SK-N-SH (cell line): ENCODE measurements at regions of chr19 and their contacts with region 1.

Region 1: DNA sequence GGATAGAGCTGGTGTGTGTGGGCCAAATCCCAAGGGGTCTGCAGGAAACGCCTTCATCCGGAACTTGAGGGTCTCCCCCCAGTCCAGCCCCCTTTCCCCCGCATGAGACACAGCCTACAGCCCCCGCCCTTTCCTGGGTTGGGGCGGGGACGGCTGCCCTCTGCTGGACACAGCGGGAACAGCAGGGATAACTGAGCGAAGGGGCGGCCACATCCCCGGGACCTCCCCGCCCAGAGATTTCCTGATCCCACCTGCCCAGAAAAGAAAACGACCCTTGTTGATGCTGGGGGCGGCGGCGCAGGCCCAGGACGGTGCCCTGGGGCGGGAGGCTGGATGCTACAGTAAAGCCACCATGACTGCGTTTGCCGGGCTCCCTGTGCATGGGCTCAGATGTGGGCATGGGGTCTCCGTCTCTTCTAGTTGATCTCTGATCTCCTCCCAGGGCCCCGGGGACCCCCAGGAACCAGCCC is 14.2 kb downstream of the ONECUT3 start:
- DNase-seq: peak; percentile 96
- H3K4me3 ChIP-seq: no peak overlapping the region
- H3K27ac ChIP-seq: no peak overlapping the region
- H3K4me1 ChIP-seq: no peaks in the 10 kb centered on the region
- H3K27me3 ChIP-seq: peaks cover 61% of the 10 kb centered on the region
- CTCF ChIP-seq: peak; percentile 92
- EP300 ChIP-seq: no peak
- RAD21 ChIP-seq: peak; percentile 69

Region 2: DNA sequence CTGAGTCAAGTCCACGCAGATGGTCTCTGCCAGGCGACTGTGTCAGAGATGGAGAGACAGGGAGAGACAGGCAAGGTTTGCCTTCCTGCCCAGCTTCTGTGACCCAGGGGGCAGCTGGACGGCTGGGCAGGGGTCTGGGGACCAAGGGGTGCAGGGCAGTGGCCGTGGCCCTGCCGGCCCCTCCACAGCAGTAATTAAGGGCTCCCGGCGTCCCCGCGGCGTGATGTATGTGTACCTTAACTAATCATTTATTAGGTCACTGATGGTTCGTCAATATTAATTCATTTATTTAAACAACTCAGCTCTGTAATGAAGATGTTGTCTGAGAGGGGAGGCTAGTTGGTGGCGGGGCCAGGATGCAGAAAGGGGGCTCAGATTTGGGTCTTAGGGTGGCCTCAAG is 86.5 kb before region 1 on chr19:
- CTCF ChIA-PET with region 1: interaction called, 128 read pairs
- POLR2A ChIA-PET with region 1: no interaction called
- DNase-seq: peak; percentile 30
- H3K4me3 ChIP-seq: no peak overlapping the region
- H3K27ac ChIP-seq: no peak overlapping the region
- H3K4me1 ChIP-seq: no peaks in the 10 kb centered on the region; a peak in 1 of 4 replicates
- H3K27me3 ChIP-seq: peaks cover 86% of the 10 kb centered on the region
- CTCF ChIP-seq: no peak
- EP300 ChIP-seq: no peak
- RAD21 ChIP-seq: no peak

Region 3: DNA sequence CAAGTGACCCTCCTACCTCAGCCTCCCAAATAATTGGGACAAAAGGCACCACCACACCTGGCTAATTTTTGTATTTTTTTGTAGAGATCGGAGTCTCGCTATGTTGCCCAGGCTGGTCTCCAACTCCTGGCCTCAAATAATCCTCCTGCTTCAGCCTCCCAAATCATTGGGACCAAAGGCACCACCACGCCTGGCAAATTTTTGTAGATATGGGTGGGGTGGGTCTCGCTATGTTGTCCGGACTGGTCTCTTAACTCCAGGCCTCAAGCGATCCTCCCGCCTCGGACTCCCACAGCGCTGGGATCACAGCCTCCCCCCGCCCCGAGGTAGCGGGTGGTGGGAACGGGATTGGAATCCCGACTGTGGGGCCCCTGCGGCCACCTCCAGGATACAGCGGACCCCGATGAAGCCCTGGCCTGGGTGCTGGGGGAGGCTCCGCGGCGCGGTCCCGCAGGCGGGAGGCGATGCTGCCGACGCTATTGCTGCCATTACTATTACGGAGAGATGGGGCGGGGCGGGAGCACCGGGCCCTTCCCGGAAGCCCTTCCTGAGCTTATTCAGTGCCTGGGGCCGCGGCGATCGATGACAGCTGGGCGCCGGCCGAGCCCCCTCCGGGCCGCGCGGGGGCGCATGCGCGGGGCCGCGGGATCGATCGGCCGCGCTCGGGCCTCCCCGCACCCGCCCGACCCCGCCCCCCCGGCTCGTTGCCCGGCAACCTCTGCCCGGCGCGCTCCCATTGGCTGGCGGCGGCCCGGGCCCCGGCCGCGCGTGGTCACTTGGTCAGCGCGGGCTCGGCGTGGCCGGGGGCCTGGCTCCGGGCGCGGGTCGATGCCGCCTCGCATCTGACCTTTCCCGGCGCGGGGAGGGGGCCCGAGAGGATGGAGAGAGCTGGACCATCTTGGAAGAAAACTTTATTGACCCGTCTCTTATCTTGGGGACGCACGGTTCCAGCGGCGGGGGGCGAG is 42.1 kb before region 1 on chr19:
- CTCF ChIA-PET with region 1: no interaction called
- POLR2A ChIA-PET with region 1: no interaction called
- DNase-seq: peak; percentile 100
- H3K4me3 ChIP-seq: peak overlapping the region; percentile 49 to 62
- H3K27ac ChIP-seq: no peak overlapping the region
- H3K4me1 ChIP-seq: peaks cover 0 to 3% of the 10 kb centered on the region in 2 experiments; a peak in 1 of 4 replicates
- H3K27me3 ChIP-seq: peaks cover 51% of the 10 kb centered on the region
- CTCF ChIP-seq: no peak
- EP300 ChIP-seq: no peak
- RAD21 ChIP-seq: no peak

Region 4: GRCh38 chr19:1780272-1780958 is 12.9 kb after region 1 on chr19:
- CTCF ChIA-PET with region 1: interaction called, 23 read pairs
- POLR2A ChIA-PET with region 1: no interaction called
- DNase-seq: peak; percentile 55
- H3K4me3 ChIP-seq: no peak overlapping the region
- H3K27ac ChIP-seq: no peak overlapping the region
- H3K4me1 ChIP-seq: no peaks in the 10 kb centered on the region
- H3K27me3 ChIP-seq: peaks cover 74% of the 10 kb centered on the region
- CTCF ChIP-seq: peak; percentile 27; the same call in 1 of the 2 replicates
- EP300 ChIP-seq: no peak
- RAD21 ChIP-seq: no peak